GM12878 (cell line): ENCODE measurements at regions of chr16 and their contacts with region 1.

Region 1: DNA sequence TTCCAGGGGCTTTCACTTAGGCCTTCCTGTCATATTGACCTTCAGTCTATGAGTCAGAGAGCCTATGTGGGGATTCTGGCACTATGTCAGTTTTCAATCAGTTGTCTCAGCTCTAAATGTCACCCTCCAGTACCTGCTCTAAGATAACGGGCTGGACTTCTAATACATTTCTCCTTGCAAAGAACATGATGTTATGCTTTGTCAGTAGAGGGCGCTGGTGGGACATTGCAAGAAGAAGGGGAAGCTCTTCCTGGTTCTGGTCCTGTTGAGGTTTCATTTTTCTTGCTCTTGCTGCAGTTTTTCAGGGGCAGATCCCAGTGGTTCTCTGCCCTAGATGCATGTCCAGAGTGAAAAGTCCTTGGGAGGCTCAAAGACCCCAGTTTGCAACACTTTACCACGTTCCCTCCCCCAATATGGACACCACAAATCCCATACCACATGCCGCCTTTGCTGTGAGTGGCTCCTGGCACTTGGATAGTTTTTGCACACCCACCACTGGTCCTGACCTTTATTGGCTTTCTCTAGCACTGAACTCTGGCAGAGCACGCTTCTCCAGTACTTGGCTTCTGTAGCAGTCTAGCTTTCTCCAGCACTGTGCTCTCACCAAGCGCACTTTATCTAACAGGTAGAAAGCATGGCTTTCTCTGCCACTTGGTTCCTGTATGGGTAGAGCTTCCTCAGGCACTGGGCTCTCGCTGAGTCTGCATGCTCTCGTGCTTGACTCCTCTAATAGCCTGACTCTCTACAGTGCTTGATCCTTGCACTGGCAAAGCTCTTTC is 49.0 kb downstream of the BCL7C start:
- DNase-seq: peak; percentile 61
- ATAC-seq: peak; percentile 97
- H3K4me3 ChIP-seq: no peak overlapping the region
- H3K27ac ChIP-seq: no peak overlapping the region
- H3K4me1 ChIP-seq: peaks cover 5% of the 10 kb centered on the region
- H3K27me3 ChIP-seq: no peaks in the 10 kb centered on the region
- CTCF ChIP-seq: peak; percentile 89 to 95 (median 93); a peak in 5 of 6 replicates
- EP300 ChIP-seq: no peak
- POLR2A ChIP-seq: no peak
- RAD21 ChIP-seq: peak; percentile 99

Region 2: DNA sequence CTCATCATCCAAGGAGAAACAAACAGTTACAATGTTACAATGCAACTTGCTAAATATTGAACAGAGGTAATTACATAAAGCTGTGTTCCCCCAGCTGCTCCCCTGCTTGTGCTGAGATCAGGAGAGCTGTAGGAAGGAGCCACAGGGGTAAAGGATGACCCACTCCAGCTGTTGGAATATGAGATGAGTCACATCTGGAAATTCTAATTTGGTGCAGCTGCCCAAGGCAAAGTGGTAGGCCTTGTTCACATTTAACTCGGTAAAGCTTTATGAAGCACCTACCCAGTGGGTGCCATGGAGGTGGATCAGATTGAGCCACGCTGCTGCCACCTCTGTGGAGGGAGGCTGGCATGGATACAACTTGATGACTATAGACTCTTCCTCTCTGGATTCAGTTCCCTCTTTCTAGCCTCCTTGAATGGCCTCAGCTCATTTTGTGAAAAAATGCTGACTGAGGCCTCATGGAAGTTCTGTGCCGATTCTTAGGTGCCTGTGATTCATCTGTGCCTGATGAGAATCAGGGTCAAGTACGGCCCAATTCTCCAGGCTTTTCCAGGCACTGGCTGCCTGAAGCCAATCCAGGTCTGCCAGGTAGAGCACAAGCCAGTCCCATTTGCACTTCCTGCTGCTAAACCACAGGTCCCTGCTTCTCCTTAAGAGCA is 242.1 kb before region 1 on chr16:
- CTCF ChIA-PET with region 1: no interaction called
- POLR2A ChIA-PET with region 1: no interaction called
- RAD21 ChIA-PET with region 1: no interaction called
- SMC1A ChIA-PET with region 1: no interaction called
- in situ Hi-C with region 1: no loop called
- intact Hi-C with region 1: no loop called
- DNase-seq: no peak
- ATAC-seq: no peak
- H3K4me3 ChIP-seq: no peak overlapping the region
- H3K27ac ChIP-seq: no peak overlapping the region
- H3K4me1 ChIP-seq: no peaks in the 10 kb centered on the region; the same call in 1 of the 2 replicates
- H3K27me3 ChIP-seq: no peaks in the 10 kb centered on the region
- CTCF ChIP-seq: no peak
- EP300 ChIP-seq: no peak
- POLR2A ChIP-seq: 0 out of 2 replicates have a peak, but pooled peaks have one; percentile 10
- RAD21 ChIP-seq: no peak

Region 3: DNA sequence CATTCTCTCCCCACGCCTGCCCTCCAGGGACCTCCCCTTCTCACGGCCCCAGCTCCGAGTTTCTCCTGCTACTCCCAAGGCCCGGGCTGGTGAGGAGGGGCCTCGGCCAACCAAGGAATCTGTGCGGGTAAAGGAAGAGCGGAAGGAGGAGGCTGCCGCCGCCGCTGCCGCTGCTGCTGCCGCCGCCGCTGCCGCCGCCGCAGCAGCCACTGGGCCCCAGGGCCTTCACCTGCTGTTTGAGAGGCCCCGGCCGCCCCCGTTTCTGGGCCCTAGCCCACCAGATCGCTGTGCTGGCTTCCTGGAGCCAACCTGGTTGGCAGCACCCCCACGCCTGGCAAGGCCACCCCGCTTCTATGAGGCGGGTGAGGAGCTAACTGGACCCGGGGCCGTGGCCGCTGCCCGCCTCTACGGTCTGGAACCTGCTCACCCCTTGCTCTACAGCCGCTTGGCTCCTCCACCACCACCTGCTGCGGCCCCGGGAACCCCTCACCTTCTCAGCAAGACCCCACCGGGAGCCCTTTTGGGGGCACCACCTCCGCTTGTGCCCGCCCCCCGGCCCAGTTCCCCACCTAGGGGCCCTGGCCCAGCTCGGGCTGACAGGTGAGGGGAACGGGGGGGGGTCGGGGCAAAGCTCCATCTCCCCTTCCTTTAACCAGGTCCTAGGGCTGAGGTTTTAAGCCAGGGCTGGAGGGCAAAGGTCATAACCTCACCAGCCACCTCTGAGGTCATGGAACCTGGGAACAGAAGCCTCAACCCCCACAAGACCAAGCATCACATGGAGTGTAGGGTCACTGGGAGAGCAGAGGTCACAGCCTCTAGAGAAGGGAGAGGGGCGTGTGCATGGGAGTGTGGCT is 175.6 kb before region 1 on chr16:
- CTCF ChIA-PET with region 1: no interaction called
- POLR2A ChIA-PET with region 1: no interaction called
- RAD21 ChIA-PET with region 1: no interaction called
- SMC1A ChIA-PET with region 1: no interaction called
- in situ Hi-C with region 1: no loop called
- intact Hi-C with region 1: no loop called
- DNase-seq: no peak
- ATAC-seq: no peak
- H3K4me3 ChIP-seq: no peak overlapping the region
- H3K27ac ChIP-seq: no peak overlapping the region
- H3K4me1 ChIP-seq: no peaks in the 10 kb centered on the region
- H3K27me3 ChIP-seq: no peaks in the 10 kb centered on the region
- CTCF ChIP-seq: no peak
- EP300 ChIP-seq: no peak
- POLR2A ChIP-seq: peak; percentile 55; the same call in 1 of the 2 replicates
- RAD21 ChIP-seq: no peak

Region 4: GRCh38 chr16:30710971-30711370 is 133.9 kb before region 1 on chr16:
- CTCF ChIA-PET with region 1: no interaction called
- POLR2A ChIA-PET with region 1: no interaction called
- RAD21 ChIA-PET with region 1: no interaction called
- SMC1A ChIA-PET with region 1: no interaction called
- in situ Hi-C with region 1: no loop called
- intact Hi-C with region 1: no loop called
- DNase-seq: no peak
- ATAC-seq: no peak
- H3K4me3 ChIP-seq: no peak overlapping the region
- H3K27ac ChIP-seq: no peak overlapping the region
- H3K4me1 ChIP-seq: no peaks in the 10 kb centered on the region; the same call in 1 of the 2 replicates
- H3K27me3 ChIP-seq: no peaks in the 10 kb centered on the region
- CTCF ChIP-seq: no peak
- EP300 ChIP-seq: no peak
- POLR2A ChIP-seq: no peak
- RAD21 ChIP-seq: no peak

Region 5: GRCh38 chr16:30867747-30868146 is 22.9 kb after region 1 on chr16:
- CTCF ChIA-PET with region 1: interaction called, 22 read pairs
- POLR2A ChIA-PET with region 1: interaction called, 10 read pairs
- RAD21 ChIA-PET with region 1: interaction called, 44 read pairs
- SMC1A ChIA-PET with region 1: interaction called, 41 read pairs
- in situ Hi-C with region 1: no loop called
- intact Hi-C with region 1: no loop called
- DNase-seq: no peak
- ATAC-seq: peak; percentile 59; the same call in 2 of the 3 replicates
- H3K4me3 ChIP-seq: no peak overlapping the region
- H3K27ac ChIP-seq: no peak overlapping the region
- H3K4me1 ChIP-seq: peaks cover 10% of the 10 kb centered on the region
- H3K27me3 ChIP-seq: no peaks in the 10 kb centered on the region
- CTCF ChIP-seq: 0 out of 6 replicates have a peak, but pooled peaks of 1 of the 3 experiments have one; percentile 10
- EP300 ChIP-seq: no peak
- POLR2A ChIP-seq: no peak
- RAD21 ChIP-seq: no peak

Region 6: GRCh38 chr16:30893744-30894539 is 49.1 kb after region 1 on chr16 and contains the start of gene BCL7C:
- CTCF ChIA-PET with region 1: interaction called, 32 read pairs
- POLR2A ChIA-PET with region 1: interaction called, 5 read pairs
- RAD21 ChIA-PET with region 1: interaction called, 22 read pairs
- SMC1A ChIA-PET with region 1: interaction called, 146 read pairs
- in situ Hi-C with region 1: no loop called
- intact Hi-C with region 1: loop called (anchors 2 kb)
- DNase-seq: no peak
- ATAC-seq: peak; percentile 90
- H3K4me3 ChIP-seq: peak within 1 kb of the TSS; percentile 93
- H3K27ac ChIP-seq: peak within 1 kb of the TSS; percentile 58
- H3K4me1 ChIP-seq: peaks cover 25% of the 10 kb centered on the region
- H3K27me3 ChIP-seq: no peaks in the 10 kb centered on the region
- CTCF ChIP-seq: peak; percentile 26 to 69 (median 45); a peak in 4 of 6 replicates
- EP300 ChIP-seq: no peak
- POLR2A ChIP-seq: peak; percentile 75
- RAD21 ChIP-seq: peak; percentile 45
- polyA plus RNA-seq, gene BCL7C: 1.1 to 2.1 TPM

Region 7: DNA sequence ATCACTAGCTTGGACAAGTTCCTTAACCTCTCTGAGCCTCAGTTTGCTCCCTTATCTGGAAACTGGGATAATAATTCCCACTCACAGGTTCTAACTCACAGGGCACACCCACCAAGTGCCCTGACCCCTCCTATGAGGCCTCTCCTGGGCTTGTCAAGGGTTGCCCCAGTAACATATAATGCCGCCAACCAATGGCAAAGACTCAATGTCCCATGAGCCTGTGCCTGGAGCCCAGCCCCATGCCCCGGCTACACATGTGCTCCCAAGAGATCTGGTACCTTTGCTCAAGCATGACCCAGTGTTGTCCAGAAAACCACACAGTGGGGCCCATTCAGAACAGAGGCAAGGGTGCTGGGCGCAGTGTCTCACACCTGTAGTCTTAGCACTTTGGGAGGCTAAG is 70.0 kb after region 1 on chr16:
- CTCF ChIA-PET with region 1: interaction called, 25 read pairs
- POLR2A ChIA-PET with region 1: no interaction called
- RAD21 ChIA-PET with region 1: interaction called, 15 read pairs
- SMC1A ChIA-PET with region 1: interaction called, 24 read pairs
- in situ Hi-C with region 1: loop called (anchors 5 kb)
- intact Hi-C with region 1: no loop called
- DNase-seq: no peak
- ATAC-seq: peak; percentile 92
- H3K4me3 ChIP-seq: no peak overlapping the region
- H3K27ac ChIP-seq: no peak overlapping the region
- H3K4me1 ChIP-seq: no peaks in the 10 kb centered on the region
- H3K27me3 ChIP-seq: no peaks in the 10 kb centered on the region; a peak in 1 of 4 replicates
- CTCF ChIP-seq: no peak
- EP300 ChIP-seq: no peak
- POLR2A ChIP-seq: no peak
- RAD21 ChIP-seq: no peak

Region 8: GRCh38 chr16:30941600-30942425 is 97.0 kb after region 1 on chr16:
- CTCF ChIA-PET with region 1: interaction called, 60 read pairs
- POLR2A ChIA-PET with region 1: interaction called, 6 read pairs
- RAD21 ChIA-PET with region 1: interaction called, 34 read pairs
- SMC1A ChIA-PET with region 1: interaction called, 39 read pairs
- in situ Hi-C with region 1: no loop called
- intact Hi-C with region 1: loop called (anchors 1 kb)
- DNase-seq: no peak
- ATAC-seq: peak; percentile 99
- H3K4me3 ChIP-seq: no peak overlapping the region
- H3K27ac ChIP-seq: no peak overlapping the region
- H3K4me1 ChIP-seq: peaks cover 9% of the 10 kb centered on the region
- H3K27me3 ChIP-seq: no peaks in the 10 kb centered on the region
- CTCF ChIP-seq: peak; percentile 94 to 99 (median 95)
- EP300 ChIP-seq: no peak
- POLR2A ChIP-seq: no peak
- RAD21 ChIP-seq: peak; percentile 67